CD4-positive, alpha-beta T cell (primary cell): ENCODE measurements at regions of chr16 and their contacts with region 1.

Region 1: DNA sequence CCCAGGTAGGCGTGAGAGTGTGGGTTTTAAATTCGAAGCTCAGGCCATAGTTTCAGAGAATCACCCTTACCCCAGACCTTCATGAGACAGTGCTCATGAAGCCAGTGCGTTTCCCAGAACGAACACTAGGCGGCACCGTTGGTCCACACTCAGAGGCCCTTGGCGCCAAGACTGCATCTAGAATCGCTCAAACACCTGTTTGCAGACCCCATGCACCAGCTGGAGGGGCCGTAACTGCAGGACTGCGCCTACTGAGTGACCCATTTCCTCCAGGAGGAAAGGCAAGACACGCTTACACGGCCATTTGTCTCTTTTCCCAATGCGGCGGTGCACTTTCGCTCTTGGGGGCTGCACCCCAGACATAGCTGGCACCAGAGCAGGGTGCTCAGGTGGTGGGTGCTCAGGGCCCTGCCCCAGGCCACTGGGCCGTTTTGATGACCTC is 34.0 kb downstream of the ADGRG5 start:
- DNase-seq: peak; percentile 69 to 89 (median 80)
- ATAC-seq: peak; percentile 94
- H3K4me3 ChIP-seq: no peak overlapping the region
- H3K4me3 Mint-ChIP-seq: no peak overlapping the region
- H3K27ac ChIP-seq: no peak overlapping the region
- H3K27ac Mint-ChIP-seq: no peak overlapping the region
- H3K4me1 ChIP-seq: peaks cover 35% of the 10 kb centered on the region
- H3K4me1 Mint-ChIP-seq: peaks cover 29% of the 10 kb centered on the region
- H3K27me3 ChIP-seq: no peaks in the 10 kb centered on the region
- H3K27me3 Mint-ChIP-seq: peaks cover 7% of the 10 kb centered on the region
- CTCF ChIP-seq: peak; percentile 98

Region 2: GRCh38 chr16:57648590-57649442 is 72.4 kb after region 1 on chr16:
- CTCF ChIA-PET with region 1: interaction called, 13 read pairs
- POLR2A ChIA-PET with region 1: interaction called, 4 read pairs
- intact Hi-C with region 1: loop called (anchors 1 kb)
- DNase-seq: peak; percentile 68 to 89 (median 82)
- ATAC-seq: peak; percentile 92
- H3K4me3 ChIP-seq: no peak overlapping the region
- H3K4me3 Mint-ChIP-seq: no peak overlapping the region
- H3K27ac ChIP-seq: no peak overlapping the region
- H3K27ac Mint-ChIP-seq: no peak overlapping the region
- H3K4me1 ChIP-seq: peaks cover 50% of the 10 kb centered on the region
- H3K4me1 Mint-ChIP-seq: peaks cover 27% of the 10 kb centered on the region
- H3K27me3 ChIP-seq: no peaks in the 10 kb centered on the region
- H3K27me3 Mint-ChIP-seq: no peaks in the 10 kb centered on the region
- CTCF ChIP-seq: peak; percentile 100

Region 3: GRCh38 chr16:57757326-57757786 is 180.9 kb after region 1 on chr16:
- CTCF ChIA-PET with region 1: no interaction called
- POLR2A ChIA-PET with region 1: no interaction called
- intact Hi-C with region 1: loop called in 1 of 2 experiments (anchors 5 kb)
- DNase-seq: peak; percentile 79 to 93 (median 88)
- ATAC-seq: peak; percentile 98
- H3K4me3 ChIP-seq: no peak overlapping the region
- H3K4me3 Mint-ChIP-seq: no peak overlapping the region
- H3K27ac ChIP-seq: no peak overlapping the region
- H3K27ac Mint-ChIP-seq: no peak overlapping the region
- H3K4me1 ChIP-seq: peaks cover 15% of the 10 kb centered on the region
- H3K4me1 Mint-ChIP-seq: no peaks in the 10 kb centered on the region
- H3K27me3 ChIP-seq: no peaks in the 10 kb centered on the region
- H3K27me3 Mint-ChIP-seq: no peaks in the 10 kb centered on the region
- CTCF ChIP-seq: peak; percentile 89

Region 4: DNA sequence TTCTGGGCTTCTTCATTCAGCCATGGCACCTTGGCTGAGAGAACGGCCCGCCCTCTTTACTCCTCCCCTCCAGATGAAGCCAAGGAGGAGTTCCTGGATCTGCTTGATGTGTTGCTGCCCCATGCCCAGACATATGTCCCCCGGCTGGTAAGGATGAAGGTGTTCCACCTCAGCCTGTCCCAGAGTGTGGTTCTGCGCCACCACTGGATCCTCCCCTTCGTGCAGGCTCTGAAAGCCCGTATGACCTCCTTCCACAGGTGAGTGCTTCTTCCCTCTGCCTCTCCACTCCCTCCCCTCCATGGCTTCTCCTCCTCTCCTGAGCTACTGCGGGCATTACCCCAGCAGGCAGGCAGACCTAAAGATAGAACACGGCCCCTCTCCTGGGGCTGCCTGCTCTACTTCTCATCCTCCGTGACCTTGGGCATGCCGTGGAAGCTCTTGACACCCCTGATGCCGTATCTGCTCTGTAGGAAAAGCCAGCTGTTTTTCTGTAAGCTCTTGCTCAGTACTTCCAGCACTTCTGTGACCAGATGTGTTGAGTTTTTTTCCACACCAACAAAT is 433.5 kb after region 1 on chr16:
- CTCF ChIA-PET with region 1: no interaction called
- POLR2A ChIA-PET with region 1: no interaction called
- intact Hi-C with region 1: loop called in 1 of 2 experiments (anchors 5 kb)
- DNase-seq: no peak
- ATAC-seq: no peak
- H3K4me3 ChIP-seq: no peak overlapping the region
- H3K4me3 Mint-ChIP-seq: no peak overlapping the region
- H3K27ac ChIP-seq: no peak overlapping the region
- H3K27ac Mint-ChIP-seq: no peak overlapping the region
- H3K4me1 ChIP-seq: no peaks in the 10 kb centered on the region
- H3K4me1 Mint-ChIP-seq: no peaks in the 10 kb centered on the region
- H3K27me3 ChIP-seq: no peaks in the 10 kb centered on the region
- H3K27me3 Mint-ChIP-seq: no peaks in the 10 kb centered on the region
- CTCF ChIP-seq: no peak